T-cell (primary cell): ENCODE measurements at regions of chr12 and their contacts with region 1.

Region 1: DNA sequence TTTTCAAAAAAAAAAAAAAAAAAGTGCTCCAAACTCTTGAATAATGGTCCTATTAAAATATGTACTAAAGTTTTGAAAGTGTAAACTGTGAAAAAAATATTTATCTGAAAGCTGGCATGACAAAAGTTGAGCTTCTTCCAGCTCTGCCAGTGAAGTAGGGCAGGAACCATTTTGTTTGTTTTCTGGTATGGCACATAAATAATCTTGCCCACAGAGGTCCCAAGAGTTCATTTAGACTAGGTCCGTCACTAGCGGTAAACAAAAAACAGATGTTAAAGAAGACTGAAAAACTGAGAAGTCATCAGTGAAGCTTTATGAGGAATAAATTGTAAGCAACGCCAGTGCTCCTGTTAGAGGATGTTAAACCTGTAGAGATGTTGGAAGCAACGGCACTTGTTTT is 7.0 kb downstream of the ERP27 start:
- DNase-seq: no peak
- ATAC-seq: no peak
- H3K4me3 ChIP-seq: no peak overlapping the region
- H3K4me3 Mint-ChIP-seq: no peak overlapping the region
- H3K27ac ChIP-seq: no peak overlapping the region
- H3K27ac Mint-ChIP-seq: peak overlapping the region in 1 of 2 donors; percentile 39
- H3K4me1 ChIP-seq: no peaks in the 10 kb centered on the region
- H3K4me1 Mint-ChIP-seq: peaks cover 7 to 21% (median 10%) of the 10 kb centered on the region in 3 donors
- H3K27me3 ChIP-seq: no peaks in the 10 kb centered on the region
- H3K27me3 Mint-ChIP-seq: no peaks in the 10 kb centered on the region

Region 2: DNA sequence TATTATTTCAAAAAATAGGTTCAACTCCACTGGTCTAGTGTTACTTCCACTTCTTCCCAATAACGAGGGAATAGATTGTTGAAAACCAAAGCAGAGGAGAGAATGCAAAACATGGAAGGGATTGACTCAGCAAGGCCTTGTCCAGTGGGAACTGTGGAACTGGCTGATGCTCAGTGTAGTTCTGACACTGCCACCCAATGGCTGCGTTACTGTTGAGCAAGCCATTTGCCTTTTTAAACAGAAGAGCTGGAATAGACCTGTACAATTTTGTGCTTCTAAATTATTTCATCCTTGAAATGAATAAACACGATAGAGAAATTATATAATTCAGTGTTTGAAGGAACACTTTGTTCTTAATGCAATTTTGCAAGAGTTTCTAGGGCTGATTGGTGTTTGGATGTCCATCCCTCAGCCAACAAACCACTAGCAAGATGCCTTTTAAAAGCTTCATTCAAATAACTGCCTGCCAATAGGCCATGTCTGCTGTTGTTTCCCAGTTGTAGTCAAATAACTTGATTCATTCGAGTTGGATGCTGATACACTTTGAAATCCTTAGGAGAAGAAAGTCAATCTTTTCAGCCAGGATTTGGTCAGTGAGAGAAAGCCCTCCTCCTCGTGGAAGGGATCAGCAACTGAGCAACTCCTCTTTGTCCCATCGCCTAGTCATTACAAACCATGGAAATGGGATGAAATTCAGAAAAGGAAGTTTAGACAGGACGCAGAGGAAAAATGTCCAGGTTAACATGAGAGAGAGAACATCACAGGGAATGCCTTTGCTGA is 38.4 kb before region 1 on chr12:
- CTCF ChIA-PET with region 1: interaction called in 1 of 2 experiments, 3 read pairs
- POLR2A ChIA-PET with region 1: interaction called in 1 of 2 experiments, 10 read pairs
- DNase-seq: no peak
- ATAC-seq: no peak
- H3K4me3 ChIP-seq: no peak overlapping the region
- H3K4me3 Mint-ChIP-seq: no peak overlapping the region
- H3K27ac ChIP-seq: no peak overlapping the region
- H3K27ac Mint-ChIP-seq: no peak overlapping the region
- H3K4me1 ChIP-seq: no peaks in the 10 kb centered on the region
- H3K4me1 Mint-ChIP-seq: no peaks in the 10 kb centered on the region
- H3K27me3 ChIP-seq: no peaks in the 10 kb centered on the region
- H3K27me3 Mint-ChIP-seq: peaks cover 3 to 7% of the 10 kb centered on the region in 2 donors